ENCODE measurements at regions of chr4 and their contacts with region 1.

Region 1: DNA sequence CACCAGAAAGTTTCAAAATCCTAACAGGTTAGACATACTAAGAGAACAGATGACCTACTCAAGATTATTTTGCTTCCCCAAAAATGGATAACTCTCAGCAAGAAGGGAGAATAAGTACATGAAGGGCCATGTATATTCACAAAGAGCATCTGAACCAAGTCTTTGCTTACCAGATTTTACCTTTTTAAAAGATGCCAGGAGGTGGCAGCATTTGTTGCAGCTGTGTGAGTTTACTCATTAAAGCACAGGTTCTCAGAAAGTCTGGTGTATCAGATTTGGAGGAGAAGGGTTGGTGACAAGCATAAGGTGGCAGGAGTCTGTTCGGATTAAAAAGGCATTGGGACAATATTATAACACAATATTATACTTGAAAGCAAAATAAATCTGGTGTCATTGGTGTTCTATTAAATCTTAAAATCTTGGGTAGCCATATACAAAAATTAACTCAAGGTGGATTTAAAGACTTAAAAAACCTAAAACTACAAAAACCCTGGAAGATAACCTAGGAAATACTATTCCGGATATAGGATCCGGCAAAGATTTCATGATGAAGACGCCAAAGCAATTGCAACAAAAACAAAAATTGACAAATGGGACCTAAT is 51.3 kb upstream of the NFKB1 start:
- DNase-seq: no peak
- H3K4me3 ChIP-seq: no peak overlapping the region
- H3K27ac ChIP-seq: no peak overlapping the region
- H3K4me1 ChIP-seq: peaks cover 0 to 11% (median 0%) of the 10 kb centered on the region in 6 donors
- H3K27me3 ChIP-seq: no peaks in the 10 kb centered on the region
- CTCF ChIP-seq: peak; percentile 33 to 67 (median 59)
- POLR2A ChIP-seq: no peak

Region 2: DNA sequence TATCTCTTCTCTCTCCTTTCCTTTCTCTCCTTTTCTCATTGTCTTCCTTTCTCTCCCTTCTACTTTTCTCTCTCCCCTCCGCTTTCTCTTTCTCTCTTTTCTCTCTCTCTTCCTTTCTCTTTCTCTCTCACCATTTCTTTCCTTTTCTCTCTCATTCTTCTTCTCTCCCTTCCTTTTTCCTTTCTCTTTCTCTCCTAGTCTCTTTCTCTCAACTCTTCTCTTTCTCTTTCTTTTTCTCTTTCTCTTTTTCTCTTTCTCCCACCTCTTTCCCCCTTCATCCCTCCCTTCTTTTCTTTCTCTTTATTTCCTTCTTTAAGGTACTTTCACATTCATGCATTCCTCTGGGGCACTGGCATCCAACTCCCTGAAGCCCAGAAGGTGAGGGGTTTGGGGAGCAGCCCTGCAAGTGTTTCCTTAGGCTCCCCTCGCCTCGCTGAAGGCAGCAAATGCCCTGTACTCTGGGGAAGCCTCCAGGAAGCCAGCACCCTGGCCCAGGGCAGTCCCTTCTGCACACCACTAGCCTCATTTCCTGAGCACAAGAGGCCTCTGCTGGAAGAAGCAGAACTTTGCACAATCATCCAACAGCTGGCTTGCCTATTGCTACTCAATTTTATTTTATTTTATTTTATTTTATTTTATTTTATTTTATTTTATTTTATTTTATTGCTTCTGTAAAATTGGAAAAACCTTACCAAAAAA is 175.5 kb after region 1 on chr4:
- intact Hi-C with region 1: loop called (anchors 5 kb)
- DNase-seq: peak; percentile 84
- H3K4me3 ChIP-seq: no peak overlapping the region
- H3K27ac ChIP-seq: no peak overlapping the region
- H3K4me1 ChIP-seq: peaks cover 0 to 14% (median 7%) of the 10 kb centered on the region in 6 donors
- H3K27me3 ChIP-seq: no peaks in the 10 kb centered on the region
- CTCF ChIP-seq: peak in 10 of 11 experiments; percentile 16 to 67 (median 45)
- POLR2A ChIP-seq: no peak

Region 3: DNA sequence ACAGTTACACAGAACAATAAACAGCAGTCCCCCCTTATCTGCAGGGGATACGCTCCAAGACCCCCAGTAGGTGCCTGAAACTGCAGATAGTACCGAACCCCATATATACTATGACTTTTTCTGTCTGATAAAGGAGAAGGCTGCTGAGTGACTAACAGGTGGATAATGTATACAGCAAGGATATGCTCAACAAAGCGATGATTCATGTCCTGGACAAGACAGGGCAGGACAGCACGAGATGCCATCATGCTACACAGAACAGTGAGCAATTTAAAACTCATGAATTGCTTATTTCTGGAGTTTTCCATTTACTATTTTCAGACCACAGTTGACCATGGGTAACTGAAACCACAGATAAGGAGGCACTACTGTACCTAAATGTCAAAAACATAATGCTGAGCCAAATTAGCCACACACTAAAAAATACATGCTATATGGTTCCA is 234.8 kb after region 1 on chr4:
- intact Hi-C with region 1: no loop called
- DNase-seq: no peak
- H3K4me3 ChIP-seq: no peak overlapping the region
- H3K27ac ChIP-seq: no peak overlapping the region
- H3K4me1 ChIP-seq: peaks cover 0 to 22% (median 8%) of the 10 kb centered on the region in 6 donors
- H3K27me3 ChIP-seq: no peaks in the 10 kb centered on the region
- CTCF ChIP-seq: no peak
- POLR2A ChIP-seq: no peak

Region 4: DNA sequence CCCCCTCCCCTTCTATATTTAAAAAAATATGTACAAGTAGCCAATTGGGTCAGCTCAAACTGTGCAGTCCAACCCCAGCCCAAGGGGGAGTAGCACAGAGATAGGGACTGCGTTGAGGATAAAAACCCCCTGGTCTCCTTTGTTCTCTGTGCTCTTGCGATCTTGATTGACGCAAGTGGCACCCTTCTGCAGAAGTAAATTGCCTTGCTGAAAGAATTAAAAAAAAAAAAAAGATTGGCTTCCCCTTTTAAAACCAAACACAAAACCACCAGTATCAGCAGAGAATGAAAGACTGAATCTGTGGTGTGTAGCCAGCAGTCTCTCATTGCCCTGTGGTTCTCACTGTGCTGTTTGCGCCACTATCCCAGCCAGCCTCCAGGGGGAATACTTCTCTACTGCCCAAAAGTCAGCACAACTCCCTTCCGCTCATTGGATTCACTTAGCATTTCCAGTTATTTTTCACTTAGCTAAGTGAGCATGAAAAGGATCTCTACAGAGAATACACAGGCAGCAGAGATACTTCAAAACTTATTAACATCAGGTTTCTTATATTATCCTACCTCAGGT is 281.2 kb after region 1 on chr4:
- intact Hi-C with region 1: no loop called
- DNase-seq: no peak
- H3K4me3 ChIP-seq: no peak overlapping the region
- H3K27ac ChIP-seq: no peak overlapping the region
- H3K4me1 ChIP-seq: peaks cover 0 to 22% (median 9%) of the 10 kb centered on the region in 6 donors
- H3K27me3 ChIP-seq: no peaks in the 10 kb centered on the region
- CTCF ChIP-seq: no peak
- POLR2A ChIP-seq: no peak

Region 5: GRCh38 chr4:103011378-103012025 is 561.6 kb after region 1 on chr4:
- intact Hi-C with region 1: loop called (anchors 5 kb)
- DNase-seq: no peak
- H3K4me3 ChIP-seq: no peak overlapping the region
- H3K27ac ChIP-seq: no peak overlapping the region
- H3K4me1 ChIP-seq: peaks cover 0 to 3% (median 0%) of the 10 kb centered on the region in 6 donors
- H3K27me3 ChIP-seq: no peaks in the 10 kb centered on the region
- CTCF ChIP-seq: no peak
- POLR2A ChIP-seq: no peak

Region 6: DNA sequence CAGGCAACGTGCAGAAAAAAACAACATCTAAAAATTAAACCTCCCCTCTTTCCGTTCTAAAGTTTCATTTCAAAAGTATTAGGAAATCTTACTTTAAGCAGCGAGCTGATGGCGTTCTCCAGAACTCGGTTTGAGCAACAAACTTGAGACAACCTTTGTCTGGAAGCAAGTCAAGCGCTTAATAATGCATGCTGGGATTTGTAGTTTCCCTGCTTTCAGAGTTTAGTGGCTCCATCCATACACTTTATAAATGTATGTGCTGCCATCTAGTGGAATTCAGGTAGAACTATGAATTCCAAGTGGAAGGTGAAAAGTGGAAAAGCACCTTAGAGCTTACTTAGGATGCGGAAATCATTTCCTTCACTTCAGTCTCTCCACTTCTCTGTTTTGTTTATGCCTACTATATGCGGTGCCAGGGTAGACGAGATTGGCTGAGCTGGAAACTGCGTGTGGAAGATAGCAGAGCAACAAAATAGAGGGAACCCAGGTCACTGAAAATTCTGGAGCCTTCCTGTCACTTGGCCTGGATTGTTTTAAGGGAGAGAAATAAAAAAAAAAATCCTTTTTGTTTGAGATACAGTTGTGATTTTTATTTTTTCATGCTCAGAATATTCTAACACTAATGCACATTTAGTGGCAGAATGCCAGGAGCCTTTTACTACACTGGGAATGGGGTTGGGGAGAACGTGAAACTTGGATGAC is 650.0 kb after region 1 on chr4 and contains the start of gene BDH2:
- intact Hi-C with region 1: loop called (anchors 10 kb)
- DNase-seq: no peak
- H3K4me3 ChIP-seq: peak within 1 kb of the TSS; percentile 24 to 67 (median 43)
- H3K27ac ChIP-seq: peak within 1 kb of the TSS; percentile 56 to 76 (median 62)
- H3K4me1 ChIP-seq: peaks cover 5 to 32% (median 18%) of the 10 kb centered on the region in 6 donors
- H3K27me3 ChIP-seq: no peaks in the 10 kb centered on the region
- CTCF ChIP-seq: peak; percentile 65 to 89 (median 81)
- POLR2A ChIP-seq: no peak
- total RNA-seq, gene BDH2: 16.8 to 42.0 (median 36.8) TPM

Measured in spleen (tissue), 13 donors.